ENCODE measurements at regions of chr2 and their contacts with region 1.

Region 1: GRCh38 chr2:70919672-70920366 is 15.9 kb upstream of the ATP6V1B1 start:
- DNase-seq: peak; percentile 48 to 52
- ATAC-seq: peak; percentile 83 to 84
- H3K4me3 ChIP-seq: no peak overlapping the region
- H3K27ac ChIP-seq: no peak overlapping the region
- H3K4me1 ChIP-seq: no peaks in the 10 kb centered on the region
- H3K27me3 ChIP-seq: peaks cover 0 to 3% (median 0%) of the 10 kb centered on the region in 3 donors
- CTCF ChIP-seq: peak; percentile 78 to 89 (median 81)
- POLR2A ChIP-seq: no peak

Region 2: GRCh38 chr2:70861777-70862625 is 57.8 kb before region 1 on chr2:
- in situ Hi-C with region 1: loop called in 2 of 4 experiments (anchors 10 kb)
- intact Hi-C with region 1: no loop called
- DNase-seq: peak; percentile 46 to 61
- ATAC-seq: peak; percentile 91 to 94
- H3K4me3 ChIP-seq: peak overlapping the region in 2 of 4 donors; percentile 3 to 4
- H3K27ac ChIP-seq: no peak overlapping the region
- H3K4me1 ChIP-seq: peaks cover 10 to 12% of the 10 kb centered on the region in 2 donors
- H3K27me3 ChIP-seq: peaks cover 0 to 16% (median 7%) of the 10 kb centered on the region in 3 donors
- CTCF ChIP-seq: peak; percentile 79 to 97 (median 86)
- POLR2A ChIP-seq: no peak

Region 3: GRCh38 chr2:70871398-70872211 is 48.2 kb before region 1 on chr2:
- in situ Hi-C with region 1: loop called in 3 of 4 experiments (anchors 10 kb)
- intact Hi-C with region 1: loop called (anchors 1 kb)
- DNase-seq: peak; percentile 64 to 66
- ATAC-seq: peak; percentile 88 to 90
- H3K4me3 ChIP-seq: peak overlapping the region; percentile 24 to 54 (median 38)
- H3K27ac ChIP-seq: no peak overlapping the region
- H3K4me1 ChIP-seq: peaks cover 7 to 8% of the 10 kb centered on the region in 2 donors
- H3K27me3 ChIP-seq: peaks cover 12 to 30% (median 19%) of the 10 kb centered on the region in 3 donors
- CTCF ChIP-seq: peak; percentile 70 to 98 (median 93)
- POLR2A ChIP-seq: no peak

Measured in gastrocnemius medialis (tissue), 4 donors.